ENCODE measurements at regions of chr17 and their contacts with region 1.

Region 1: DNA sequence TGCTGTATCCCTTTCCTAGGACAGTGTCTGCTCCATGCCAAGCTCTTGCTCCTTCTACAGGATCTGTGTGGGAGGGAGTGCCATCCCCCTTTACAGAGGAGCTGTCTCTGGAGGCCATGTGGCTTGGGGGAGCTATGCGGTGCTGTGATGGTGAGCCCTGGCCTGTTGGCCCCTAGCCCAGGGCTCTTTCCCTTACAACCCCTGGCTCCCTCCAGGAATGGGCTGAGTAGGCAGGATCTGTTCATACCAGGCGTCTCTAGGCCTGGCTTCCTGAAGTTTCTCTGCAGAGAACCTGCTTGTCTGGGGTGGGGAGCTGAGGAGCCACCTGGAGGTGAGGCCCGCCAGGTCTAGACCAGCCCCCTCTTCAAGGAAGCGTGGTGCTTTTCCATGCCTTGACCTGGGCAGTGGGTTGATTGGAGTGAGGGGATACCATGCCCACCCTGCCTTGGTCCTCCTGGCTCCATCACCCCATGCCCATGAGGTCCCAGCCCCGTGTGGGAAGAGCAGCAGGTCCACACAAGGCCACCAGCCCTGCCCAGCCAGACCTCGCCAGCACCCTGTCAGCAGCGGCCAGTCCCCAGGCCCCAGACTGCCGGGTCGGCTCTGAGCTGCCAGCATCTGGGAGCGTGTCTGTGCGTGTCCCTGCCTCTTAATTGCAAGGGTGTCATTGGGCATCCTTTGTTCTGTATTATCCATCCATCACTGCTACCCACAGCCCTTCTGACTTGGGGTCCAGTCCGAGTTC is 14.6 kb downstream of the LLGL2 start:
- DNase-seq: peak; percentile 70
- H3K4me3 ChIP-seq: no peak overlapping the region
- H3K27ac ChIP-seq: peak overlapping the region in 1 of 2 experiments; percentile 22; a peak in 1 of 4 replicates
- H3K4me1 ChIP-seq: peaks cover 0 to 15% of the 10 kb centered on the region in 2 experiments; a peak in 1 of 4 replicates
- H3K27me3 ChIP-seq: no peaks in the 10 kb centered on the region
- CTCF ChIP-seq: no peak
- EP300 ChIP-seq: no peak
- RAD21 ChIP-seq: no peak

Region 2: DNA sequence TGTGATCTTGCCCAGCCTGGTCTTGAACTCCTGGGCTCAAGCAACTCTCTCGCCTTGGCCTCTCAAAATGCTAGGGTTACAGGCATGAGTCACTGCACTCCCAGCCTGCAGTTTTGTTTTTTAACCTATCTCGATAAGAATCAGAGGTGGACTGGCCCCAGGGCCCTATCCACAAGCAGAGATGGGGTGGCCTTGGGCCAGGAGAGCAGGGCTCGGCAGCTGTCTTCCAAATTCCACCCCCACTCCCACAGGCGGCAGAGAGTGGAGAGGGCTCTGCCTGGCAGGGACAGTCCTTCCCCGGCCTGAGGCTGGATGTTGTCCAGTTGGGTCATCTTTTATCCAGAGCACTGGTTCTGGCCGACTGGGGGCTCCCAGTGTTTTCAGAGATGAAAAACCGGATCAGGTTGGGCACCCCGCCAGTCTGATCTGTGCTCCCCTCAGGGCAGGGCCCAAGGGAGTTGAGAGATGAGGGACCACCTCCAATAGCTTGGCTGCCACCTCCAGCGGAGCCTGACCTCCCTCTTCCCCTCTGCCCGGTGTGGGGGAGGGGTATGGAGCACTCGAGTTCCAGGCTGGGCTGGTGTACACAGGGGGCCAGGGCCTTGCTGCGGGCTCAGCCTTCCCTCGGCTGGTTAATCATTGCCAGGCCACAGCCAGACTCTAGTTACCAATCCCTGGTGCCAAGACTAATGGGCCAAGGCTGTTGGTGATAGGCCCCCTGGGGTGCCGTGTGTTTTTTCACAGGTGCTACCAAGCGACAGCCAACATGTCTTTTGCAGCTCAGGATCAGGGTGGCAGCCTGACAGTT is 17.1 kb after region 1 on chr17:
- CTCF ChIA-PET with region 1: interaction called, 11 read pairs
- POLR2A ChIA-PET with region 1: interaction called, 5 read pairs
- DNase-seq: peak; percentile 83
- H3K4me3 ChIP-seq: no peak overlapping the region
- H3K27ac ChIP-seq: peak overlapping the region in 1 of 2 experiments; percentile 65; a peak in 2 of 4 replicates
- H3K4me1 ChIP-seq: peaks cover 4 to 19% of the 10 kb centered on the region in 2 experiments; a peak in 1 of 4 replicates
- H3K27me3 ChIP-seq: no peaks in the 10 kb centered on the region
- CTCF ChIP-seq: no peak
- EP300 ChIP-seq: no peak
- RAD21 ChIP-seq: no peak

Measured in SK-N-SH (cell line).